T-cell (primary cell): ENCODE measurements at regions of chr3 and their contacts with region 1.

Region 1: GRCh38 chr3:185929192-185930151 is 8.3 kb downstream of the TRA2B start:
- DNase-seq: no peak
- ATAC-seq: no peak
- H3K4me3 ChIP-seq: peak overlapping the region; percentile 6 to 38
- H3K4me3 Mint-ChIP-seq: peak overlapping the region; percentile 98 to 100 (median 100)
- H3K27ac ChIP-seq: peak overlapping the region; percentile 16
- H3K27ac Mint-ChIP-seq: peak overlapping the region; percentile 55 to 68
- H3K4me1 ChIP-seq: peaks cover 22 to 80% of the 10 kb centered on the region in 2 experiments
- H3K4me1 Mint-ChIP-seq: peaks cover 96 to 100% (median 97%) of the 10 kb centered on the region in 3 donors
- H3K27me3 ChIP-seq: no peaks in the 10 kb centered on the region
- H3K27me3 Mint-ChIP-seq: no peaks in the 10 kb centered on the region

Region 2: GRCh38 chr3:185912929-185913901 is 16.3 kb before region 1 on chr3:
- CTCF ChIA-PET with region 1: interaction called in 1 of 2 experiments, 3 read pairs
- POLR2A ChIA-PET with region 1: interaction called, 14 to 20 read pairs
- DNase-seq: no peak
- ATAC-seq: peak; percentile 14 to 29 (median 20)
- H3K4me3 ChIP-seq: no peak overlapping the region
- H3K4me3 Mint-ChIP-seq: peak overlapping the region in 1 of 3 donors; percentile 32
- H3K27ac ChIP-seq: no peak overlapping the region
- H3K27ac Mint-ChIP-seq: no peak overlapping the region
- H3K4me1 ChIP-seq: no peaks in the 10 kb centered on the region
- H3K4me1 Mint-ChIP-seq: peaks cover 6 to 30% (median 8%) of the 10 kb centered on the region in 3 donors
- H3K27me3 ChIP-seq: no peaks in the 10 kb centered on the region
- H3K27me3 Mint-ChIP-seq: no peaks in the 10 kb centered on the region

Region 3: GRCh38 chr3:185956244-185956643 is 26.8 kb after region 1 on chr3:
- CTCF ChIA-PET with region 1: no interaction called
- POLR2A ChIA-PET with region 1: interaction called in 1 of 2 experiments, 12 read pairs
- DNase-seq: no peak
- ATAC-seq: no peak
- H3K4me3 ChIP-seq: no peak overlapping the region
- H3K4me3 Mint-ChIP-seq: no peak overlapping the region
- H3K27ac ChIP-seq: no peak overlapping the region
- H3K27ac Mint-ChIP-seq: peak overlapping the region in 1 of 2 donors; percentile 20
- H3K4me1 ChIP-seq: peaks cover 6 to 8% of the 10 kb centered on the region in 2 experiments
- H3K4me1 Mint-ChIP-seq: peaks cover 0 to 4% (median 4%) of the 10 kb centered on the region in 3 donors
- H3K27me3 ChIP-seq: peaks cover 0 to 18% of the 10 kb centered on the region in 2 experiments
- H3K27me3 Mint-ChIP-seq: peaks cover 5 to 18% of the 10 kb centered on the region in 2 donors

Region 4: DNA sequence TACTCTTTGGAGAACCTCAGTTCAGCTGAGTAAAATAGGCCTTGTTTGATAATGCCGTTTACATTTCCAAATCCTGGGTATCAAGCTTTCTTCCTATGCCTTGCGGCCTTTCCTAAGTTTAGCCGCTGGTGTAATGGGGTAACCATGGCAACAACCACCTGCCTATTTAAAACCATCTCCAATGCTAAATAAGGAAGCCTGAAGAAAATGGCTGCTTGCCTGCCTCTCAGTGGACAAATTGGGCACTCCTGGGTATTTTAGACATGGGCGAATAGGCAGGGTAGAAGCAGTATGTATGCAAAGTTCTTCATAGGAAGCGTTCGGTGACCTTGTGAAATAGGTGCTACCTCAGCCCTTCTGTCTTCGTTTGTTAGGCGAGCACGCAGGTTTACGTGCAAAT is 309.8 kb after region 1 on chr3:
- CTCF ChIA-PET with region 1: no interaction called
- POLR2A ChIA-PET with region 1: no interaction called
- DNase-seq: no peak
- ATAC-seq: no peak
- H3K4me3 ChIP-seq: no peak overlapping the region
- H3K4me3 Mint-ChIP-seq: no peak overlapping the region
- H3K27ac ChIP-seq: no peak overlapping the region
- H3K27ac Mint-ChIP-seq: no peak overlapping the region
- H3K4me1 ChIP-seq: peaks cover 2 to 15% of the 10 kb centered on the region in 2 experiments
- H3K4me1 Mint-ChIP-seq: peaks cover 14 to 16% (median 14%) of the 10 kb centered on the region in 3 donors
- H3K27me3 ChIP-seq: peaks cover 0 to 17% of the 10 kb centered on the region in 2 experiments
- H3K27me3 Mint-ChIP-seq: peaks cover 4 to 6% of the 10 kb centered on the region in 2 donors